Activated CD4-positive, alpha-beta T cell treated with anti-CD3 and anti-CD28 coated beads, Interleukin-2, amount 10 ng/mL, durations not matched to agents 24 days and 14 days (primary cell): ENCODE measurements at regions of chr15 and their contacts with region 1.

Region 1: DNA sequence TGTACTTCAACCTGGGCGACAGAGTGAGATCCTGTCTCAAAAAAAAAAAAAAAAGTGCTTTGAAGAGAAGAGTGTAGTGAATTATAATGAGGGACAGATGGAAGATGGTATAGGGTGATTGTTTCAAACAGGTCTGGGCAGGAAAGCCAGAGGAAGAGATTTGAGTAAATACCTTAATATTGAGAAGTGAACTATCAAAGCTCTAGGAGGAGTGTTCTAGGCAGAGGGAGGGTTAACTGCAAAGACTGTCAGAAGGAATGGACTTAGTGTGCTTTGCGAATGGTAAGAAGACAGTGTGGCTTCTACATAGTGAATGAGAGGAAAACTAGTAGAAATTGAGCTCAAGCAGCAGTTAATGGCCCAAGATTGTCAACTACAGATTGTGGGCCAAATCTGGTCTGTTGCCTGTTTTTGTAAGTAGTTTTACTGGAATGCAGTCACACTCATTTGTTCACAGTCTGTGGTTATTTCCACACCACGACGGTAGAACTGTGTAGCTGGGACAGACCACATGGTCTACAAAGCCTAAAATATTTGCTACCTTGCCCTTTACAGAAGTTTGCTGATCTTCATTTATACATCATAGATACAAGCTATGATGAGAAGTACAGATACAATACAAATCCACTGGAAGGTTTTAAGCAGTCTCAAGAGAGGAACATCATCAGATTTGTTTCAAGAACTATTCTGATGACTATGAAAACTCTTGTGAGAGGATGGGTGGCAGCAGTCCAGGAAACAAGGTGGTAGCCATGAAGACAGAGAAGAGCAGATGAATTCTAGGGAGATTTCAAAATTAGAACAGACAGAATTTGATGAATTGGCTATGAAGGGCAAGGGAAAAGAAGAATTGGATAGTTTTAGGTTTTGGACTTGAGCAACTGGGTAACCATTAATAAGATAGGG is 16.5 kb upstream of the USP50 start:
- DNase-seq: peak; percentile 76
- H3K4me3 Mint-ChIP-seq: peak overlapping the region; percentile 29
- H3K27ac Mint-ChIP-seq: peak overlapping the region; percentile 87
- H3K4me1 Mint-ChIP-seq: peaks cover 13% of the 10 kb centered on the region
- H3K27me3 Mint-ChIP-seq: no peaks in the 10 kb centered on the region

Region 2: GRCh38 chr15:50876989-50877360 is 314.0 kb after region 1 on chr15:
- intact Hi-C with region 1: loop called (anchors 10 kb)
- DNase-seq: peak; percentile 93
- H3K4me3 Mint-ChIP-seq: peak overlapping the region; percentile 81
- H3K27ac Mint-ChIP-seq: peak overlapping the region; percentile 11
- H3K4me1 Mint-ChIP-seq: peaks cover 48% of the 10 kb centered on the region
- H3K27me3 Mint-ChIP-seq: peaks cover 13% of the 10 kb centered on the region